ENCODE measurements at regions of chr18 and their contacts with region 1.

Region 1: DNA sequence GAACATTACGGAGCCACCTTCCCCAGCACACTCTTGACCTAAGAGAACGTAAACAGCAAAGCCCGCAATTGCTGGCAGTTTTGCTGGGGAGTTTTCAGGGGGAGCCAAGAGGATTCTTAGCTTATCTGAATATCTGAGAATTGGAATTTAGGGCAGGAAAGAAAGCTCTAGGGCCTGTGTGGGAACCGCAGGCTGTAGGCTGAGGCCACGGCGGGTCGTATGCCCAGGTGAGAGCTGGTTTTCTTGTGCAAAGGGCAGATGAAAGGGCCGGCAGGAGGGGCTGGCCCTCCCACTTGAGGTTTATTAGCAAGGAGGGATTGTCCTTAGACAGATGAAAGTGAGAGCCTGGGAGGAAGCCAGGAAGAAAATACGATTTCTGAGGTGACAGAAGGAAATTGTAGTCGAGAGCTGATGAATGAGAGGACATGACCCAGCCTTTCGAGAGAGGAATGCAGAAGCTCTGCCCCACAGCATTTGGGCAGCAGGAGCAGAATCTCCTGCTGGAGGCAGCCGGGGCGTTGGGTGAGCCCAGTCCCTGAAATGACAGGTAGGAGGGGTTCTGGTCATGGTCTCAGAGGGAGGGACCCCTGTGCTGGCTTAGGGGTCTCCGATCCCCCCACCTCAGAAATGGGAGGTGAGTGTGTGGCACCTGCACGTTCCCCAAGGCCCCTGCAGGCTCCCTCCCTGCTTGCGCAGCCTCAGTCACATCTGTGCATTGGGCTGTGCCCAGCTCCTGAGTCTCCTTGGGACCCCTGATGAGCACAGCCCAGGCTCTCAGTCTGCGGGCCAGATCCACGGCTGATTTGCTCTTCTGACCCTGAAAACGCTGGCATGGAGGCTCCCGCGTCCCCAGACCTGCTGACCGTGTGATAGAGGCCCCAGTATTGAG is 61.1 kb downstream of the CABLES1 start:
- DNase-seq: no peak

Region 2: DNA sequence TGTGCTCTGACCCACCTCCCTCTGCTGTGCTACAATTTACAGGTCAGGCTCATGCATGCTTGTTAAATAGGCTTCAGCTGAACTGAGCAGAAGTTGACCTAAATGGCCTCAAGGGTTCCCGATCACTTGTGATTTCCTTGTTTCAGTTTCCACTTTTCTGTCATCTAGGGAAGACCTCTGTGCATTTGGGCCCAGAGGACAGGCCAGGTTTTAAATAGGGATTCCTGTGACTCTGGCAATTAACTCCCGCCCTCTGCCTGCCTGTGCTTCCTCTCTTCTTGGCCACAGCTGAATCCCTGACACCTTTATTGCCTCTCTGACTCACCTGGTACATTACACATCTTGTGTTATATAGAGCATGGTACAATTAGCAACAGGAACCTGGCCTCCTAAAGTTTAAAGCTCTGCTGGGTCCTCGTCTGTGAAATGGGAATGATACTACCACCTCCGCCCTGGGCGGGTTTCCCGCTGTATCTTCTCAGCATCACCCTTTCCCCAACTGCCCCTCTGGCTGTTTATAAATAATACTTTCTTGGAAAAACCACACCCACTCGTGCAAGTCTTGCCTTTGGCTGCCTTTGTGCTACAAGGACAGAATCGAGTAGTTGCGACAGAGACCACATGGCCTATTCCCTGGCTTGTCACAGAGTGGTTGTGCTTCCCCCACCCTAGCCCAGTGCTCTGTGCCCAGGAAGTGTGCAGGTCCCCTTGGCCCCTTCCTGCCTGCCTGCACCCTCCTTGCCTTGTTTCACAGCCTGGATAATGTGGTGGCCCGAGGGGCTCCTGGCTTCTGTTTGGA is 53.1 kb before region 1 on chr18:
- CTCF ChIA-PET with region 1: no interaction called
- POLR2A ChIA-PET with region 1: no interaction called
- DNase-seq: no peak

Region 3: GRCh38 chr18:23207191-23207955 is 11.0 kb after region 1 on chr18:
- CTCF ChIA-PET with region 1: interaction called, 17 read pairs
- POLR2A ChIA-PET with region 1: no interaction called
- DNase-seq: peak; percentile 74

Measured in HEK293T (cell line).